ENCODE measurements at regions of chr3 and their contacts with region 1.

Region 1: DNA sequence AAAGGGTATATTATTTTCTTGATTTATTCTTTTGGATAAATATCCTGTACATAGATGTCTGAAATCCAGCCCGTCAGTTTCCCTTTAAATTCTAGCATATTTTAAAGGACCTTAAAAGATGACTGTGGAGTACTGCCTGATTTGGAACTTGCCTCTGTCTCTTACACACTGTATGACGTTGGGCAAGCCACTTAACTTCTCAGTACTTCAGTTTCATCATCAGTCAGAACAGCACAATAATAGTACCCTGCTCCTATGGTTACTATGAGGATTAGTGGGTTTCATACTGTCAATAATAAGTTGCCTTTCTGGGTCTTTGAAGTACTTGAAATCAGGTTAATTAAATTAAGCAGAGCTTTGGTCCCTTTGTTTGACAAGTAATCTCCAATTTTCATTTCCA is 374.3 kb downstream of the TIGIT start:
- DNase-seq: no peak
- ATAC-seq: peak; percentile 58 to 77
- H3K4me3 ChIP-seq: no peak overlapping the region
- H3K27ac ChIP-seq: no peak overlapping the region
- H3K4me1 ChIP-seq: peaks cover 5 to 24% of the 10 kb centered on the region in 2 donors
- H3K27me3 ChIP-seq: no peaks in the 10 kb centered on the region
- CTCF ChIP-seq: no peak
- POLR2A ChIP-seq: no peak

Region 2: GRCh38 chr3:114207768-114208167 is 460.3 kb before region 1 on chr3:
- in situ Hi-C with region 1: no loop called
- intact Hi-C with region 1: no loop called
- DNase-seq: no peak
- ATAC-seq: no peak
- H3K4me3 ChIP-seq: no peak overlapping the region
- H3K27ac ChIP-seq: no peak overlapping the region
- H3K4me1 ChIP-seq: no peaks in the 10 kb centered on the region
- H3K27me3 ChIP-seq: no peaks in the 10 kb centered on the region
- CTCF ChIP-seq: no peak
- POLR2A ChIP-seq: no peak

Region 3: DNA sequence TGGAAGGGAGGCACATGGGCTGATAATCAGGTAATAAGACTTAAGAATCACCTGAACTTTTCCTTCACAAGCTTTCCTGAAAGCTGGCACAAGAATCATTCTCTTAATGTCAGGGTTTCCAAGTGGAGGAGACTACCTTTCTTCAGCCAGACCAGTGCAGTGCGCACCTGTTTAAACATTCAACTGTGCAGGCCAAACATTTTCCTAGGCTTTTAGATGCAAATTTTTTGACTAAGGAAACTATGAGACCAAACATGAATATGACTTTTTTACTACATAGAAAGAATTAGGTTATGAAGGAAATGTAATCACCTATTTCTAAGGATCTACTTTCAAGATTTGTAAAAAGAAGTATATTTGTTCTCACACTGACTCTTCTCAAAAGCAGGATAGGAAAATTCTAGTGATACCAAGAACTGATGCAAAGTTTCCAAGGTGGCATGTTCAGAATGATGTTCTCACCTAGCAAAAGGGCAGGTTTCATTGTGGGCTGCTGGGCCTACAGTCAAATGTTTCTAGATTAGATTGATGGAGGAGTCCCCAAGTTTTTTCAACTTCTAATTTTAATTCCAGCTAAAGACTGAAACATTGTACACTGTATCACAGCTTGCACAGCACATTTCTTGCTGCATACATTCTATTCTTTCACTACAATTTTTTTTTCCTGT is 35.2 kb before region 1 on chr3:
- in situ Hi-C with region 1: no loop called
- intact Hi-C with region 1: loop called (anchors 5 kb)
- DNase-seq: no peak
- ATAC-seq: no peak
- H3K4me3 ChIP-seq: no peak overlapping the region
- H3K27ac ChIP-seq: no peak overlapping the region
- H3K4me1 ChIP-seq: peaks cover 19 to 25% of the 10 kb centered on the region in 2 donors
- H3K27me3 ChIP-seq: no peaks in the 10 kb centered on the region
- CTCF ChIP-seq: no peak
- POLR2A ChIP-seq: no peak